CD4-positive, alpha-beta T cell (primary cell): ENCODE measurements at regions of chr9 and their contacts with region 1.

Region 1: GRCh38 chr9:127937388-127938280 is at the start of gene DPM2:
- DNase-seq: peak; percentile 74 to 94 (median 84)
- ATAC-seq: peak; percentile 85
- H3K4me3 ChIP-seq: peak within 1 kb of the TSS; percentile 90
- H3K4me3 Mint-ChIP-seq: peak within 1 kb of the TSS; percentile 93
- H3K27ac ChIP-seq: peak within 1 kb of the TSS; percentile 48 to 80
- H3K27ac Mint-ChIP-seq: peak within 1 kb of the TSS; percentile 88
- H3K4me1 ChIP-seq: peaks cover 47% of the 10 kb centered on the region
- H3K4me1 Mint-ChIP-seq: peaks cover 63% of the 10 kb centered on the region
- H3K27me3 ChIP-seq: no peaks in the 10 kb centered on the region
- H3K27me3 Mint-ChIP-seq: no peaks in the 10 kb centered on the region
- CTCF ChIP-seq: no peak
- total RNA-seq, gene DPM2: 41.7 to 47.6 TPM

Region 2: DNA sequence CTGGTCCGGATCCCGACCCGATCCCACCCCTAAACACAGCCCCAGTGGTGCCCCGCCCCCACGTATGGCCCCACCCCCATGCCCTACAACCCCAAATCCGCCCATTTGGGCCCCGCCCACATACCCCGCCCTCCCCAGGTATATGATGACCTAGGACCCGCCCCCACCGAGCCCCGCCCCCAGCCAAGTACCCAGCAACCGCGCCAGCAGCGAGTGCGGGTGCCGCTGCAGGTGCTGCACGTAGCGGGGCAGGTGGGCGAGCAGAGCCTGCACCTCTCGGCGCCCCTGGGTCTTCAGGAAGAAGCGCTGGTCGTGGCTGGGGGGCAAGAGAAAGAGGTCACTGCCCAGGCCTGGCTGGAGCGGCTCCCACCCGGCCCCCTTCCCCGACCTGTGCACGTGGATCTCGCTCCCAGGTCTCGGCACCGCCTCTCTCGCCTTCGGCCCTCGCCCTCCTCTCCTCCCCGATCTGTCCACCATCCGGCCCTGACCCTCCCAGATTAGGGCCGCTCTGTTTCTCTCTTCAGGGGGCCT is 10.1 kb before region 1 on chr9:
- CTCF ChIA-PET with region 1: interaction called, 4 read pairs
- POLR2A ChIA-PET with region 1: interaction called, 7 read pairs
- intact Hi-C with region 1: loop called in 1 of 2 experiments (anchors 1 kb)
- DNase-seq: peak; percentile 73 to 92 (median 78)
- ATAC-seq: peak; percentile 69
- H3K4me3 ChIP-seq: peak overlapping the region; percentile 59
- H3K4me3 Mint-ChIP-seq: peak overlapping the region; percentile 62
- H3K27ac ChIP-seq: no peak overlapping the region
- H3K27ac Mint-ChIP-seq: no peak overlapping the region
- H3K4me1 ChIP-seq: peaks cover 52% of the 10 kb centered on the region
- H3K4me1 Mint-ChIP-seq: peaks cover 28% of the 10 kb centered on the region
- H3K27me3 ChIP-seq: peaks cover 0 to 11% of the 10 kb centered on the region in 2 experiments
- H3K27me3 Mint-ChIP-seq: peaks cover 4% of the 10 kb centered on the region
- CTCF ChIP-seq: no peak

Region 3: GRCh38 chr9:128094166-128094967 is 156.7 kb after region 1 on chr9:
- CTCF ChIA-PET with region 1: no interaction called
- POLR2A ChIA-PET with region 1: interaction called, 10 read pairs
- intact Hi-C with region 1: no loop called
- DNase-seq: peak; percentile 33 to 87 (median 62)
- ATAC-seq: peak; percentile 78
- H3K4me3 ChIP-seq: no peak overlapping the region
- H3K4me3 Mint-ChIP-seq: peak overlapping the region; percentile 78
- H3K27ac ChIP-seq: peak overlapping the region; percentile 62 to 81
- H3K27ac Mint-ChIP-seq: peak overlapping the region; percentile 90
- H3K4me1 ChIP-seq: peaks cover 82% of the 10 kb centered on the region
- H3K4me1 Mint-ChIP-seq: peaks cover 79% of the 10 kb centered on the region
- H3K27me3 ChIP-seq: no peaks in the 10 kb centered on the region
- H3K27me3 Mint-ChIP-seq: no peaks in the 10 kb centered on the region
- CTCF ChIP-seq: no peak